WTC11 (cell line): ENCODE measurements at regions of chr1 and their contacts with region 1.

Region 1: GRCh38 chr1:207963427-207964194 is 52.7 kb upstream of the CD34 start:
- DNase-seq: peak; percentile 87
- ATAC-seq: peak; percentile 69
- H3K4me3 Mint-ChIP-seq: peak overlapping the region; percentile 81
- H3K27ac Mint-ChIP-seq: no peak overlapping the region
- H3K4me1 Mint-ChIP-seq: peaks cover 14% of the 10 kb centered on the region
- H3K27me3 Mint-ChIP-seq: peaks cover 60% of the 10 kb centered on the region
- CTCF ChIP-seq: peak; percentile 97

Region 2: GRCh38 chr1:207797229-207797961 is 166.2 kb before region 1 on chr1:
- CTCF ChIA-PET with region 1: interaction called, 17 read pairs
- POLR2A ChIA-PET with region 1: no interaction called
- DNase-seq: peak; percentile 81
- ATAC-seq: peak; percentile 84
- H3K4me3 Mint-ChIP-seq: no peak overlapping the region
- H3K27ac Mint-ChIP-seq: no peak overlapping the region
- H3K4me1 Mint-ChIP-seq: peaks cover 8% of the 10 kb centered on the region
- H3K27me3 Mint-ChIP-seq: no peaks in the 10 kb centered on the region
- CTCF ChIP-seq: peak; percentile 46

Region 3: GRCh38 chr1:207828485-207829158 is 135.0 kb before region 1 on chr1:
- CTCF ChIA-PET with region 1: interaction called, 18 read pairs
- POLR2A ChIA-PET with region 1: interaction called, 3 read pairs
- DNase-seq: peak; percentile 70
- ATAC-seq: peak; percentile 95
- H3K4me3 Mint-ChIP-seq: no peak overlapping the region
- H3K27ac Mint-ChIP-seq: no peak overlapping the region
- H3K4me1 Mint-ChIP-seq: peaks cover 7% of the 10 kb centered on the region
- H3K27me3 Mint-ChIP-seq: no peaks in the 10 kb centered on the region
- CTCF ChIP-seq: peak; percentile 45; the same call in 1 of the 2 replicates

Region 4: DNA sequence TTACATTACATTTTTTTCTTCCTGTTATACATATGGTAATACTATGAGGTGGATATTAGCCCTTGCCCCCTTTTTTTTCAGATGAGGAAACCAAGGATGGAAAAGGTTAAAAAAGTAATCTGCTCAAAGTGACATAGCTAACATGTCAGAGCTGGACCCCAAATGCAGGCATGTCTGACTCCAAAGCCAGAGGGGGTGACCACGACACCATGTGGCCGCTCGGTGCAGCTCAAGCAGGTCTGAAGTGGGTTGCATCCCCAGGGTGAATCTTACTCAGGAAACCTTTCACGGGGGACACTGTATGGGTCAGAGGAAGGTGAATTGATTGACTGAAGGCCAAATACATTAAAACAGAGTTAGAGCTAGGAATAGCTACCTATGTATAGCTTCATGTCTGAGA is 87.5 kb before region 1 on chr1:
- CTCF ChIA-PET with region 1: interaction called, 70 read pairs
- POLR2A ChIA-PET with region 1: no interaction called
- DNase-seq: peak; percentile 32
- ATAC-seq: peak; percentile 90
- H3K4me3 Mint-ChIP-seq: no peak overlapping the region
- H3K27ac Mint-ChIP-seq: no peak overlapping the region
- H3K4me1 Mint-ChIP-seq: peaks cover 7% of the 10 kb centered on the region
- H3K27me3 Mint-ChIP-seq: peaks cover 2% of the 10 kb centered on the region
- CTCF ChIP-seq: no peak

Region 5: DNA sequence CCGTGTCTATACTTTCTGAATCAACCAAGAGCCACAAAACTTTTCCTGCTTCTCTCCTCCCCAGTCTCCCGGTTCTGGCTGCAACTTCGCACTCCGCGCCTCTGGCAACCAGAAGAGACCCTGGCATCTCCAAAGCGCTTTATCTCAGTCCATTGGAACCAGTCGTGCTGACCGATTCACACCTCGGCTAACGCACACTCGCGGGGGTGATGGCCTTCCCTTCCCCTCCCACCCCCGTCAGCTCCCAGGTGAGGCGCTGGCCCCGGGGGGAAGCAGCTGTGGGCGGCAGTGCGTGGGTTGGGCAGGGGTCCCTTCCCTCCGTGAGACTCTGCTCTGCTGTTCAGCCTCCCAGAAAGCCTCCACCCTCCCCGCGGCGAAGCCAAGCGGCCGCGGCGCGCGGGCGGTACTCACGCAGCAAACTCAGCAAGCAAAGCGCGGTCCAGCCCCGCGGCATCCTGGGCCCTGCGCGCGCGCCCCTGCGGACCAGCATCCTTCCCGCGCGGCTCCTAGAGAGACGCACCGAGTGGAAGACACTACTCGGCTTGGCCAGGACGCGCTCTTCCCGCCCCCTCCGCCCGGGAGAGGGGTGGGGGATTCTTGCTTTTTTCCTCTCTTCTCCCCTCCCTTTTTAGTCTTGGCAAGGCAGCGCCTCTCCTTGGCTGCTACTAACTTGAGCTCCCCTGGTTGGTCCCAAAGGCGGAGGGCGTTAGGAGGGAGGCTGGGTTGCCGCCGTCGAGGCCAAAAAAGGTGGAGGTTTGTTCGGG is 52.8 kb before region 1 on chr1 and contains the start of gene CD34:
- CTCF ChIA-PET with region 1: interaction called, 26 read pairs
- POLR2A ChIA-PET with region 1: no interaction called
- DNase-seq: peak; percentile 55
- ATAC-seq: peak; percentile 85
- H3K4me3 Mint-ChIP-seq: peak within 1 kb of the TSS; percentile 59
- H3K27ac Mint-ChIP-seq: no peak within 1 kb of the TSS
- H3K4me1 Mint-ChIP-seq: peaks cover 12% of the 10 kb centered on the region
- H3K27me3 Mint-ChIP-seq: peaks cover 52% of the 10 kb centered on the region
- CTCF ChIP-seq: no peak
- total RNA-seq, gene CD34: 0.18 to 0.35 TPM (median 0.27 TPM) in 3 replicates

Region 6: DNA sequence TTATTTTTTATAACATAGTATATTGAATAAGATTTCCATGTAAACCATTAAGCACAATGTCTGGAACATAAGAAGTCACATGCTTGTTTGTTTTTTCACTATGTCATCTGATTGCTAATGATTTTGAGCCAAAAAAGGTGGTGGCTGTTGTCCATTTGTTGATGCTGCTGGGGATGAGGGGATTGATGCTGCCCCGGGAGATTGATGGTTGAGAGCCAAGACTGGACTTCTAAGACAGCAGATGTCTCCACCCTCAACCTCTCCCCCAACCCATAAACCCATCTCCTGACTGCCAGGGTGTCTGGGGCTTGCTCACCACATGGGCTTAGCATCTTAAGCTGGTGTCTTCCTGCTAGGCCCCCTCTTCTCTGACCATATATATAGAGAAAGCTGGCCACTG is 16.9 kb before region 1 on chr1:
- CTCF ChIA-PET with region 1: interaction called, 17 read pairs
- POLR2A ChIA-PET with region 1: interaction called, 7 read pairs
- DNase-seq: no peak
- ATAC-seq: no peak
- H3K4me3 Mint-ChIP-seq: no peak overlapping the region
- H3K27ac Mint-ChIP-seq: no peak overlapping the region
- H3K4me1 Mint-ChIP-seq: no peaks in the 10 kb centered on the region
- H3K27me3 Mint-ChIP-seq: no peaks in the 10 kb centered on the region
- CTCF ChIP-seq: no peak

Region 7: GRCh38 chr1:207981976-207982375 is 18.4 kb after region 1 on chr1:
- CTCF ChIA-PET with region 1: interaction called, 21 read pairs
- POLR2A ChIA-PET with region 1: no interaction called
- DNase-seq: peak; percentile 58
- ATAC-seq: peak; percentile 100
- H3K4me3 Mint-ChIP-seq: no peak overlapping the region
- H3K27ac Mint-ChIP-seq: no peak overlapping the region
- H3K4me1 Mint-ChIP-seq: no peaks in the 10 kb centered on the region
- H3K27me3 Mint-ChIP-seq: no peaks in the 10 kb centered on the region; the same call in none of the 2 replicates
- CTCF ChIP-seq: peak; percentile 73

Region 8: GRCh38 chr1:208047476-208047934 is 83.9 kb after region 1 on chr1:
- CTCF ChIA-PET with region 1: no interaction called
- POLR2A ChIA-PET with region 1: no interaction called
- DNase-seq: no peak
- ATAC-seq: no peak
- H3K4me3 Mint-ChIP-seq: no peak overlapping the region
- H3K27ac Mint-ChIP-seq: no peak overlapping the region
- H3K4me1 Mint-ChIP-seq: peaks cover 11% of the 10 kb centered on the region
- H3K27me3 Mint-ChIP-seq: no peaks in the 10 kb centered on the region; the same call in 1 of the 2 replicates
- CTCF ChIP-seq: no peak